HEK293T (cell line): ENCODE measurements at regions of chr16 and their contacts with region 1.

Region 1: DNA sequence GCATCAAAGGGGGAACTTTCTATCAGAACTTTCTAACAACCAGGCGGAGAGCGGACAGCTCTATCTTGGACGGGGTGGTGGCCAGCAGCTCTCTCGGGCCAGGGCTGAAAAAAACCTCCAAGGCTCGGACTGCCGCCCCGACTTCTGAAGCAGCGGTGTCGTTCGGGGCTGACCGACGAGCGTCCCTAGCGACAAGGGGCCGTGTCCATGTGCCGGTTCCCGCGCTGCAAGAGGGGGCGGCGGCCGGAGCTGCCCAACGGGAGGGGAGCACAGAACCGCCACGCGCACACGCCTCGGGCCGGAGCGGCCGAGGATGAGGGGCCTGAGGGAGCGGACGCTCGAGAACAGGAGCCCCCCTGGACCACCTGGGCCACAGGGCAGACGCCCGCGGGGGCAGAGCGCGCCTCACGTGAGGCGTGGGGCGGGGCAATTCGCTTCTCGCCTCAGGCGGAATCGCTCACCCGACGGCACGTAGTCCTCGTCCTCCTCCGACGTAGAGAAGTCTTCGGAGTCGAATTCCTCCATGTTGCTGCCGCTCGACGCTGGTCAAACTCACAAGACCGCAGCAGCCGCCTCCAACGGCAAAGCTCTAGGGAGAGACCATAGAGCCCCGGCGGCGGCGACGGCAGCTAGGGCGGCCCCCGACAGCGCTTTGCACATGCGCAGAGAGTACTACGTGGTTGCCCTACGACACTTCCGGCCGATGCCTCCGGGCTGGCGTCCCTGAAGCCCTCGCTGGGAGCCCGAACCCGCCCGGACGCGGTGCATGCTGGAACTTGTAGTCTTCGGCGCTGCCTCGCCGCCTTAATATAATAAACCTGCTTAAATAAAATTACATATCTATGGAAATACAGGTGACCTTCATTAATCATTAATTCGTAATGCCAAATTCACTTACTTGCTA is at the start of gene CFDP1:
- DNase-seq: peak; percentile 97

Region 2: GRCh38 chr16:75420987-75421819 is 11.9 kb before region 1 on chr16:
- CTCF ChIA-PET with region 1: no interaction called
- POLR2A ChIA-PET with region 1: interaction called, 10 read pairs
- DNase-seq: peak; percentile 45

Region 3: GRCh38 chr16:75443298-75443697 is 10.2 kb after region 1 on chr16:
- CTCF ChIA-PET with region 1: interaction called, 10 read pairs
- POLR2A ChIA-PET with region 1: interaction called, 16 read pairs
- DNase-seq: no peak

Region 4: DNA sequence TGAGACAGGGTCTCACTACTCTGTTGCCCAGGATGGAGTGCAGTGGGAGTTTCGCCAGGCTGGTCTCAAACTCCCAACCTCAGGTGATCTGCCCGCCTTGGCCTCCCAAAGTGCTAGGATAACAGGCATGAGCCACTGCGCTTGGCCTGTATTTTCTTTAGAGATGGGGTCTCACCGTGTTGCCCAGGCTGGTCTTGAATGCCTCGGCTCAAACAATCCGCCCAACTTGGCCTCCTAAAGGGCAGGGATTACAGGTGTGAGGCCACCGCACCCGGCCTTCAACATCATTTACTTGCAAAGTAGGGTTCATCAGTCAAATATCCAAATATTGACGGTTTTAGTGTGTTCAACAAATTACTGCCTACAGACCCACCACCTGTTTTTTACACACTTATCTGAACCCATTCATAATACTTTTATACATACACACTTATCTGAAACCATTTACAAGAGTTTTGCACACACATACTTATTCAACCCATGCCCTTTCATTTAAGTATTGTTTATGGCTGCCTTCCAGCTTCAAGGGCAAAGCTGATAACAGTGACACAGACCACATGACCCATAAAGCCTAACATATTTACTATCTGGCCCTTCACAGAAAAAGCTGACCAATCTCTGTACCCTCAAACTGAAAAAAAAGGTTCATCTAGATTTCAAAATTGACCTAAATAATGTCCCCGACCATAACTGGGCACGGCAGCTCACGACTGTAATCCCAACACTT is 19.5 kb after region 1 on chr16:
- CTCF ChIA-PET with region 1: no interaction called
- POLR2A ChIA-PET with region 1: interaction called, 10 read pairs
- DNase-seq: no peak